ENCODE measurements at regions of chr3 and their contacts with region 1.

Region 1: DNA sequence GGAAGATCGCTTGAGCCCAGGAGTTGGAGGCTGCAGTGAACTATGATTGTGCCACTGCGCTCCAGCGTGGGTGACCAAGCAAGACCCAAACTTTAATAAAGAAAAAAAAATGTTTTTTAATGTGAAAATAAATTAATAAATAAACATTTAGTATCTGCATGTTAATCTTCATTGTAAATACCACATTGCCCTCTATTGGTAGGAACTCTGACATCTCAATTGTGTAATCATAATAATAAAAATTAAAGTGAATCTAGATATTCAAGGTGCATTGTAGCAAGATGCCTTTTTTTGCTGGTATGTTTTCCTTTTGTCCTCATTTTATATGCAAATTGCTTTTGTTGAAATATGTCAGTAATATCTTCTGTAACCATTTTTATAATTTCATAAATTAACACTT is 95.0 kb upstream of the LIMD1 start:
- DNase-seq: no peak
- H3K4me3 ChIP-seq: no peak overlapping the region
- H3K27ac ChIP-seq: no peak overlapping the region
- H3K4me1 ChIP-seq: no peaks in the 10 kb centered on the region
- H3K27me3 ChIP-seq: no peaks in the 10 kb centered on the region
- CTCF ChIP-seq: peak; percentile 31 to 70 (median 51)
- EP300 ChIP-seq: no peak
- POLR2A ChIP-seq: no peak

Region 2: DNA sequence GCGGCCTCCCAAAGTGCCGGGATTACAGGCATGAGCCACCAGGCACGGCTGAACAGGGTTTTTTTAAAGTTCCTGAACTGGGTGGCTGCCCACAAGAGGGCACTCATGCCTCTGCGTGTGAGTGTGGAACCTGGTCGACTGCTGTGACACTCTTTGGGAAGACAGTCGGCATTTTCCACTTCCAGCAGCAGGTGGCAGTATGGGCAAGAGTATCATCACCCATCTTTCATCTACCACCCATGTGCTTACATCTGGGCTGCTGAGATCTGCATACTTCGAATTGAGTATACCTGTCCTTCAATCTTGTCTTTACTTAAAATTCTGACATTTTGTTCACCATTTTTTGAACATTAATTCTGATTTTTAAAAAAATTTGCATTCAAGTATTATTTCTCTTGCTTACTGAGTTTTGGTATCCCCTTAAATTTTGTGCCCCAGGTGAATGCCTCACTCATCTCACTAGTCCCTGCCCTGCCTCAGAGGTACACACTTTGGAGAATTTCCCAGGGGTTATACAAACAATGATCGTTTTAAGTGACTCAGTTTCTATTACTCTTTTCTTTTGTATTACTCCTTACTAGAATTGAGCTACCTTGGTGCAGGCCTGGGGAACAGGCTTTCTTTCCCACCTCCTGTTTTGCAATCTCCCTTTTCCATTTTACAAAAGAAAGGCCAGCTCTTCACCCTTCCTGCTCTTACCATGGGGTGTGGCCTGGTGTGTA is 461.6 kb before region 1 on chr3:
- in situ Hi-C with region 1: loop called in 3 of 4 experiments (anchors 5 to 25 kb)
- intact Hi-C with region 1: loop called (anchors 5 kb)
- DNase-seq: peak; percentile 95
- H3K4me3 ChIP-seq: peak overlapping the region in 1 of 4 donors; percentile 13
- H3K27ac ChIP-seq: peak overlapping the region in 1 of 4 donors; percentile 33
- H3K4me1 ChIP-seq: peaks cover 14 to 39% (median 25%) of the 10 kb centered on the region in 4 donors
- H3K27me3 ChIP-seq: no peaks in the 10 kb centered on the region
- CTCF ChIP-seq: peak; percentile 87 to 99 (median 91)
- EP300 ChIP-seq: no peak
- POLR2A ChIP-seq: no peak

Region 3: GRCh38 chr3:45043728-45044299 is 455.7 kb before region 1 on chr3:
- in situ Hi-C with region 1: loop called in 3 of 4 experiments (anchors 5 to 25 kb)
- intact Hi-C with region 1: loop called (anchors 5 kb)
- DNase-seq: no peak
- H3K4me3 ChIP-seq: no peak overlapping the region
- H3K27ac ChIP-seq: peak overlapping the region; percentile 7 to 47 (median 29)
- H3K4me1 ChIP-seq: peaks cover 0 to 19% (median 6%) of the 10 kb centered on the region in 4 donors
- H3K27me3 ChIP-seq: no peaks in the 10 kb centered on the region
- CTCF ChIP-seq: no peak
- EP300 ChIP-seq: no peak
- POLR2A ChIP-seq: no peak

Region 4: DNA sequence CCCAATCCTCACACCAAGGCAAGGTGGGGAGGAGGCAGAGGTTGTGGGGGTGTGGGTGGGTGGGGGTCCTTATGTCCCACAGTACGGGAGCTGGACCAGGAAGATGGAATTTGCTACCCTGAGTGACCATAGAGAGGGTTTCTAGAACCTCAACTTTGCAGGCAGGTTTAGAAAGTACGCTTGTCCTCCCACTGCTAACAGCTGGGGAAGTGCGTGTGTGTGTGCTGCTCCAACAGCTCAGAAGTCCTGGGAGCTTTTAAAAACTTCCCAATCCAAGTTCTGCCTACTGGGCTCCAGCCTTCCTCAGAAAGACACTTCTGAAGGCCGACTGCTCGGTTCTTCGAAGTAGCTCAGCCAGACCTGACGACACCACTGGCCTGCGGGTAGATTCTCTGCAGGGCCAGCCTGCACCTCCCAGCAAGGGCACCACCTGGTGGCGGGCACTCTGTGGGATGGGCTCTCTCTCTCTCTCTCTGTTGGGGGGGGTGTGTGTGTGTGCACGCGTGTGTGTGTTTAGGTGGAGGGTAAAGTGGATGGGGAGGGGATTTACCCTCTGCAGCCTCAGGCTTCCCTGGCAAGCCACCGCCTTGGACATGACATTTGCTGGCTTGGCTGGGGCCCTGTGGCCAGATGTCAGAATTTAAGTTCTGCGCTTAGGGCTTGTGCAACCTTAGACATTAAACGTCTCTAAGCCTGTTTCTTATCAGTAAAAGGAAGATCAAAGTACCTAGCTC is 289.1 kb before region 1 on chr3:
- in situ Hi-C with region 1: loop called in 2 of 4 experiments (anchors 10 kb)
- intact Hi-C with region 1: no loop called
- DNase-seq: peak; percentile 90
- H3K4me3 ChIP-seq: no peak overlapping the region
- H3K27ac ChIP-seq: peak overlapping the region in 3 of 4 donors; percentile 49 to 74 (median 70)
- H3K4me1 ChIP-seq: peaks cover 0 to 30% (median 16%) of the 10 kb centered on the region in 4 donors
- H3K27me3 ChIP-seq: no peaks in the 10 kb centered on the region
- CTCF ChIP-seq: peak; percentile 74 to 98 (median 79)
- EP300 ChIP-seq: no peak
- POLR2A ChIP-seq: no peak

Region 5: GRCh38 chr3:45224824-45225464 is 274.6 kb before region 1 on chr3:
- in situ Hi-C with region 1: loop called in 2 of 4 experiments (anchors 10 kb)
- intact Hi-C with region 1: no loop called
- DNase-seq: peak; percentile 74
- H3K4me3 ChIP-seq: peak overlapping the region; percentile 23 to 70 (median 61)
- H3K27ac ChIP-seq: peak overlapping the region in 3 of 4 donors; percentile 7 to 38 (median 7)
- H3K4me1 ChIP-seq: peaks cover 0 to 17% (median 9%) of the 10 kb centered on the region in 4 donors
- H3K27me3 ChIP-seq: peaks cover 60% of the 10 kb centered on the region
- CTCF ChIP-seq: peak; percentile 24 to 39 (median 32)
- EP300 ChIP-seq: no peak
- POLR2A ChIP-seq: no peak

Region 6: GRCh38 chr3:46266598-46266997 is 767.1 kb after region 1 on chr3:
- in situ Hi-C with region 1: no loop called
- intact Hi-C with region 1: no loop called
- DNase-seq: no peak
- H3K4me3 ChIP-seq: no peak overlapping the region
- H3K27ac ChIP-seq: no peak overlapping the region
- H3K4me1 ChIP-seq: no peaks in the 10 kb centered on the region
- H3K27me3 ChIP-seq: no peaks in the 10 kb centered on the region
- CTCF ChIP-seq: no peak
- EP300 ChIP-seq: no peak
- POLR2A ChIP-seq: no peak